Naive thymus-derived CD4-positive, alpha-beta T cell (primary cell): ENCODE measurements at regions of chr19 and their contacts with region 1.

Region 1: DNA sequence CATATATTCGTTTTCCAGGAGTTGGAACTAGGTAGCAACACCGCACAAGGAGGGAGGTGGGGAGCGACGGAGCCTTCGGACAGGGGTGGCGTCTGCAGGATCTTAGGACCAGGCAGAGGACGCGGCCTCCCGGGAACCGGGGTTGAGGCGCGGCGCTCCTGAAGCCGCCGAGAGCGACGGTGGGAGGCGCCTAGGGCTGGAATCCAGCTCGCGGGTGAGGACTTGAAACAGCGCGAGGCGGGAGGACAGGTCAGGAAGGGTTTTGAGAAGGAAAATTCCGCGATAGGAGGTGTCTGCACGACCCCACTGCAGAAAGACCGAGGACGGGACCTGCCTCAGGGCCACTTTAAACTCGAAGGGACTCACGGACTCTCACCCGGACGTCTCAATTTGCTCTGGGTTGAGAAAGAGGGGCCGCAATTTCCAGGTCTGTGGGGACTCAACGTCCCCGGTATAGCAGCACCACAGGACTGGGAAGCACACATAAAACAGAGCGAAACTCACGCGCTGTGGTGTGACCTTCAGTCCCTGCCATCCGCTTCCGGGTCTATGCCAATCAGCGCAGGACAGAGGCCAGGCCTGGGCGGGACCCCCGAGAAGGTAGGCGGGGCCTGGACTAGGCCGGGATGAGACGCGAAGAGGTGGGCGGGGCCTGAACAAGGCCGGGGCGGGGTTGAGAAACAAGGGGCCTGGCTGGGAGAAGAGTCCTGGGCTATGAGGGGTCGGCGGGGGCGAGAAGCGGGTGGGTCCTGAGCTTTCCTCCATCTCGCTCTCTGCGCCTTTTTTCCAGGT is at the start of gene ZNF320:
- DNase-seq: peak; percentile 78 to 92 (median 89)
- ATAC-seq: peak; percentile 100
- H3K4me3 ChIP-seq: peak within 1 kb of the TSS; percentile 96
- H3K4me3 Mint-ChIP-seq: peak within 1 kb of the TSS; percentile 88 to 96 (median 92)
- H3K27ac ChIP-seq: peak within 1 kb of the TSS; percentile 79
- H3K27ac Mint-ChIP-seq: peak within 1 kb of the TSS; percentile 19 to 94 (median 93)
- H3K4me1 ChIP-seq: peaks cover 4 to 5% of the 10 kb centered on the region in 2 donors
- H3K4me1 Mint-ChIP-seq: peaks cover 5 to 33% (median 17%) of the 10 kb centered on the region in 7 donors
- H3K27me3 ChIP-seq: no peaks in the 10 kb centered on the region
- H3K27me3 Mint-ChIP-seq: no peaks in the 10 kb centered on the region
- total RNA-seq, gene ZNF320: 4.5 to 13.4 (median 11.6) TPM

Region 2: GRCh38 chr19:52722062-52723003 is 175.0 kb before region 1 on chr19:
- CTCF ChIA-PET with region 1: no interaction called
- POLR2A ChIA-PET with region 1: no interaction called
- intact Hi-C with region 1: no loop called
- DNase-seq: no peak
- ATAC-seq: no peak
- H3K4me3 ChIP-seq: no peak overlapping the region
- H3K4me3 Mint-ChIP-seq: no peak overlapping the region
- H3K27ac ChIP-seq: no peak overlapping the region
- H3K27ac Mint-ChIP-seq: no peak overlapping the region
- H3K4me1 ChIP-seq: no peaks in the 10 kb centered on the region
- H3K4me1 Mint-ChIP-seq: peaks cover 0 to 11% (median 8%) of the 10 kb centered on the region in 7 donors
- H3K27me3 ChIP-seq: no peaks in the 10 kb centered on the region
- H3K27me3 Mint-ChIP-seq: no peaks in the 10 kb centered on the region

Region 3: GRCh38 chr19:52786457-52787359 is 110.6 kb before region 1 on chr19 and contains the start of gene ZNF600:
- CTCF ChIA-PET with region 1: no interaction called
- POLR2A ChIA-PET with region 1: no interaction called
- intact Hi-C with region 1: loop called in 1 of 2 experiments (anchors 5 kb)
- DNase-seq: peak; percentile 33 to 65 (median 45)
- ATAC-seq: peak; percentile 98
- H3K4me3 ChIP-seq: peak within 1 kb of the TSS; percentile 60
- H3K4me3 Mint-ChIP-seq: peak within 1 kb of the TSS; percentile 83 to 96 (median 92)
- H3K27ac ChIP-seq: peak within 1 kb of the TSS; percentile 70
- H3K27ac Mint-ChIP-seq: peak within 1 kb of the TSS; percentile 28 to 97 (median 81)
- H3K4me1 ChIP-seq: peaks cover 0 to 3% of the 10 kb centered on the region in 2 donors
- H3K4me1 Mint-ChIP-seq: peaks cover 19 to 35% (median 32%) of the 10 kb centered on the region in 7 donors
- H3K27me3 ChIP-seq: no peaks in the 10 kb centered on the region
- H3K27me3 Mint-ChIP-seq: no peaks in the 10 kb centered on the region
- total RNA-seq, gene ZNF600: 6.7 to 30.0 (median 19.8) TPM

Region 4: DNA sequence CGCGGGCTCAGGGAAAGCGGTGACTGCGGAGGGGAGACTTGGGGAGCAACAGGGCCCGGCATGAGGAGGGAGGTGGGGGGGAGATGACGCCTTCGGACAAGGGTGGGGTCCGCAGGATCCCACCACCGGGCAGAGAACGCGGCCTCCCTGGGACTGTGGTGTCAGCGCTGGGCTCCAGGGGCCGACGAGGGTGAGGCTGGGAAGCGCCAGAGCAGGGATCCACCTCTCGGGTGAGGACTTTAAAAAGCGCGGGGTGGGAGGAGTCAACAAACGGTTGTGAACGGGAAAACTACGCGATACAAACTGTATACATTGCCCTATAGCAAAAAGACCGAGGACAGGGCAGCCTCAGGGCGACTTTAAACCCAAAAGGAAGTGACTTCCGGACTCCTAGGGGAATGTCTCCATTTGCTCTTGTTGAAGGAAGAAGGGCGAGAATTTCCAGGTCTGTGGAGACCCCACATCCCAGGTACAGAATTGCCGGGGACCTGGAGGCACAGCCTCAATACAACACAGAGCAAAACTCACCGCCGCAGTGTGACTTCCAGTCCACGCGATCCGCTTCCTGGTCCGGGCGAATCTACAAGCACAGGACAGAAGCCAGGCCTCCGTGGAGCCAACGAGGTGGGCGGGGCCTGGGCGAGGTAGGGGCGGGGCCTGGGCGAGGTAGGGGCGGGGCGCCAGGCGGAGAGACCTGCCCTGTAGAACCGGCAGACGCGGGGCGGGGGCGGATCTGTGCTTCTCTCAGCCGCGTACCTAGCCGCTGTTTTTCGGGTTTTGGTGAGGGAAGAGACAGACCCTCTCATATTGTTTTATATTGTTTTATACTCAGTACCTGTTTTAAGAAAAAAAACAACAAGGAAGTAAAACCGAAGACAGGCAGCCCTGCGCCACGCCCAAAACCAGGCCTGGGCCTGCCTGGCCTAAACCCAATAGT is 25.8 kb after region 1 on chr19 and contains the start of gene ZNF888:
- CTCF ChIA-PET with region 1: no interaction called
- POLR2A ChIA-PET with region 1: no interaction called
- intact Hi-C with region 1: loop called (anchors 2 kb)
- DNase-seq: peak; percentile 52 to 89 (median 78)
- ATAC-seq: peak; percentile 100
- H3K4me3 ChIP-seq: peak within 1 kb of the TSS; percentile 87
- H3K4me3 Mint-ChIP-seq: peak within 1 kb of the TSS; percentile 80 to 94 (median 92)
- H3K27ac ChIP-seq: peak within 1 kb of the TSS; percentile 77
- H3K27ac Mint-ChIP-seq: peak within 1 kb of the TSS; percentile 23 to 93 (median 91)
- H3K4me1 ChIP-seq: no peaks in the 10 kb centered on the region
- H3K4me1 Mint-ChIP-seq: peaks cover 11 to 37% (median 24%) of the 10 kb centered on the region in 7 donors
- H3K27me3 ChIP-seq: no peaks in the 10 kb centered on the region
- H3K27me3 Mint-ChIP-seq: peaks cover 0 to 11% (median 6%) of the 10 kb centered on the region in 5 donors
- total RNA-seq, gene ZNF888: 2.1 to 7.2 (median 6.0) TPM

Region 5: DNA sequence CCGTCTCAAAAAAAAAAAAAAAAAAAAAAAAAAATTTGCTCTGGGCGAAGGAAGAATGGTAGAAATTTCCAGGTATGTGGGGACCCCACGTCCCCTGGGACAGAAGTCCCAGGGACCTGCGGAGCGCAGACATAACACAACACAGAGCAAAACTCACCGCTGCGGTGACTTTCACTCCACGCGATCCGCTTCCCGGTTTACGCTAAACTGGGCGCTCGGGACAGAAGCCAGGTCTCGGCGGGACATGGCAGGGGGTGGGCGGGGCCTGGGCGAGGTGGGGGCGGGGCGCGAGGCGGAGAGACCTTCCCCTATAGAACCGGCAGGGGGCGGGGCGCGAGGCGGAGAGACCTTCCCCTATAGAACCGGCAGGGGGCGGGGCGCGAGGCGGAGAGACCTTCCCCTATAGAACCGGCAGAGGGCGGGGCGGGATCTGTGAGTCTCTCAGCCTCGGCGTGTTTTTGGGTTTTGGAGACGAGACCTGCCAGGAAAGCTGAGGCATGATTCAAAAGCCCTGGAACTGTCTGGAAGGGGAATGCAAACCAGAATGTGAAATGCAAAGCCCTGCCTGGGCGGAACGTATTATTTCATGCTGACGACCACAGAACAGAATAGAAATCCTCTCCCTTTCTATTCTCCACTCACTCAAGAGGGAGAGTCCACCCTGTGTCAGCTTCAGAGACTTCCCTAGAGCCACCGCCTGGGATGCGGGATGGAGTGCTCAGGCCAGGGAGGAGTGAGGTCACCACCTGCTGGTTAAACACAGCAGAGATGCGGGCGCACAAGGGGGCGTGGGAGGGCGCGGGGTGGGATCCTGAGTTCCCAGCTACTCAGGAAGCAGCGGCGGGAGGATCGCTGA is 96.2 kb after region 1 on chr19:
- CTCF ChIA-PET with region 1: no interaction called
- POLR2A ChIA-PET with region 1: no interaction called
- intact Hi-C with region 1: loop called (anchors 1 to 5 kb)
- DNase-seq: peak; percentile 49 to 85 (median 81)
- ATAC-seq: peak; percentile 100
- H3K4me3 ChIP-seq: peak overlapping the region; percentile 60
- H3K4me3 Mint-ChIP-seq: peak overlapping the region; percentile 56 to 92 (median 86)
- H3K27ac ChIP-seq: no peak overlapping the region
- H3K27ac Mint-ChIP-seq: peak overlapping the region in 5 of 9 donors; percentile 25 to 83 (median 54)
- H3K4me1 ChIP-seq: peaks cover 0 to 6% of the 10 kb centered on the region in 2 donors
- H3K4me1 Mint-ChIP-seq: peaks cover 8 to 26% (median 14%) of the 10 kb centered on the region in 7 donors
- H3K27me3 ChIP-seq: no peaks in the 10 kb centered on the region
- H3K27me3 Mint-ChIP-seq: peaks cover 0 to 23% (median 14%) of the 10 kb centered on the region in 5 donors

Region 6: DNA sequence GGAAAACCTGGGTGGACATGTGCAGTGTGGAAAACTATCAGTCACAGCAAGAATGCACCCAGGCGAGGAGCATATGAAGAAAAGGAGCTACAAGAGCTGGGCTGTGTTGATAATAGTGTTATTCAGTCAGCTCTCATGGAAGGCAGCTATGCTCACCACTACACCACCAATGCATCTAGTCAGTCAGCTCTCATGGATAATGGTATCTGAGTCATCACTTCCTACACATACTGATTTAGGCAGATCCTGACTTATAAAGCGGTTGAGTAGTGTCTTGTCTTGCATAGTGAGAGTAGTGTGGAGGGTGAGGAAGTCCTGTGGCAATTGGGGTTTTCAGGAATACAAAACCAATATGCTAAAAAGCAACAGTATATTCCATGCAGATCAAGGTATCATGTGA is 214.9 kb after region 1 on chr19:
- CTCF ChIA-PET with region 1: no interaction called
- POLR2A ChIA-PET with region 1: no interaction called
- intact Hi-C with region 1: no loop called
- DNase-seq: no peak
- ATAC-seq: no peak
- H3K4me3 ChIP-seq: no peak overlapping the region
- H3K4me3 Mint-ChIP-seq: no peak overlapping the region
- H3K27ac ChIP-seq: no peak overlapping the region
- H3K27ac Mint-ChIP-seq: no peak overlapping the region
- H3K4me1 ChIP-seq: no peaks in the 10 kb centered on the region
- H3K4me1 Mint-ChIP-seq: no peaks in the 10 kb centered on the region
- H3K27me3 ChIP-seq: no peaks in the 10 kb centered on the region
- H3K27me3 Mint-ChIP-seq: peaks cover 0 to 17% (median 2%) of the 10 kb centered on the region in 5 donors